ENCODE measurements at regions of chr5 and their contacts with region 1.

Region 1: GRCh38 chr5:170232786-170233185 is at the start of gene C5orf58:
- DNase-seq: no peak
- ATAC-seq: no peak
- H3K4me3 ChIP-seq: peak within 1 kb of the TSS in 1 of 12 donors; percentile 47
- H3K27ac ChIP-seq: no peak within 1 kb of the TSS
- H3K4me1 ChIP-seq: no peaks in the 10 kb centered on the region
- H3K27me3 ChIP-seq: no peaks in the 10 kb centered on the region
- CTCF ChIP-seq: no peak
- POLR2A ChIP-seq: no peak
- total RNA-seq, gene C5orf58: not detected

Region 2: GRCh38 chr5:170348137-170348633 is 115.4 kb after region 1 on chr5:
- intact Hi-C with region 1: loop called in 3 of 10 experiments (anchors 5 kb)
- DNase-seq: no peak
- ATAC-seq: peak in 3 of 4 donors; percentile 23 to 36 (median 31)
- H3K4me3 ChIP-seq: peak overlapping the region in 1 of 12 donors; percentile 12
- H3K27ac ChIP-seq: peak overlapping the region in 4 of 12 donors; percentile 8 to 43 (median 28)
- H3K4me1 ChIP-seq: peaks cover 0 to 23% (median 6%) of the 10 kb centered on the region in 12 donors
- H3K27me3 ChIP-seq: peaks cover 0 to 23% (median 4%) of the 10 kb centered on the region in 9 donors
- CTCF ChIP-seq: peak in 9 of 12 donors; percentile 5 to 53 (median 37)
- POLR2A ChIP-seq: no peak